OCI-LY7 (cell line): ENCODE measurements at regions of chr4 and their contacts with region 1.

Region 1: GRCh38 chr4:186307497-186307896 is 41.5 kb downstream of the F11 start:
- DNase-seq: no peak
- H3K4me3 ChIP-seq: no peak overlapping the region
- H3K27ac ChIP-seq: no peak overlapping the region
- H3K4me1 ChIP-seq: no peaks in the 10 kb centered on the region
- CTCF ChIP-seq: no peak

Region 2: DNA sequence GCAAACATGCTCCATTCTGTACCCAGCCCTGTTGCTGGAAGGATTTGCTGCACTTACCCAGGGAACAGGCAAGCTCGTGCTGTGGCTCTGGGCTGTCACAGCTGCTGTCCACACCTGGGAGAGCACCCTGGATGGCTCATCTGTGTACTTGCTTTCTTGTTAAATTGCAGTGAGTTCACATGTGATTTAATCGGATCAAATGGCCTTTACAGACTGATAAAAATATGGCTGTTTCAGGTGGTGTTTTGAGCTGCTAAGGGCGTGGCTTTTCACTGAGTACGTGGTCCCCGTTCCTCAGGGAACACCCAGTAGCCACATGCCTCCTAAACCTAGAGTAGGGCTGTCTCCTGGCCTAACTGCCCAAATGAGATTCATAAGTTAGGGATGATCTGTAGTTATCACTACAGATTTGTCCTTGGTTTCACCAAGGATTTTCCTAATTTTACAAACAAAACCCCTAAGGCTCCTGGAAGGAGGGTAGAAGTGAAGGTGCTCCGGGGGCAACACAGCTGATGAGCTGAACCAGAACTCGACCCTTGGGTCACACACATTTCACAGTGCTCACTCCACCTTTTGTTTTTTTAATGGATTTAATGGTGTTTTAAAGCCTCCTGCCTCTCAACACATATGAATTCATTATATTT is 66.5 kb before region 1 on chr4:
- CTCF ChIA-PET with region 1: no interaction called
- POLR2A ChIA-PET with region 1: no interaction called
- intact Hi-C with region 1: no loop called
- DNase-seq: no peak
- H3K4me3 ChIP-seq: no peak overlapping the region
- H3K27ac ChIP-seq: no peak overlapping the region
- H3K4me1 ChIP-seq: no peaks in the 10 kb centered on the region
- CTCF ChIP-seq: no peak

Region 3: DNA sequence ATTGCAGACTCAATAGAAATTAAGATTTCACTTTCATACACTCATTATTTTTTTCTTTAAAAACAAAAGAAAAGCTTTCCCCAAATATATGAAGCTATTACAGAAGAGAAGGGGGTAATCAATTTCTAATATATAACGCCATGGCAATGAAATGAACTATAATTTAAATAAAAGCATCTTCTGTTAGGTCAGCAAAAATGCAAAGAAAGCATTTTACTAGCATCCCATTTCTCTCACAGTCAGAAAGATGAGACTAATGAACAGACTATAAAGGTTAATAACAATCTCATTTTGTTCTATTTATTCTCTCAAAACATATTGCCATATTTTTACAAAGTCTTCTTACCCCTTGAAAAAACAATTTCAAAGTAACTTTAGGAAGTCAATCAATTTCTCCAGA is 1920.8 kb after region 1 on chr4:
- CTCF ChIA-PET with region 1: no interaction called
- POLR2A ChIA-PET with region 1: interaction called, 13 read pairs
- intact Hi-C with region 1: no loop called
- DNase-seq: no peak
- H3K4me3 ChIP-seq: no peak overlapping the region
- H3K27ac ChIP-seq: no peak overlapping the region
- H3K4me1 ChIP-seq: no peaks in the 10 kb centered on the region
- CTCF ChIP-seq: no peak